ENCODE measurements at regions of chr3 and their contacts with region 1.

Region 1: DNA sequence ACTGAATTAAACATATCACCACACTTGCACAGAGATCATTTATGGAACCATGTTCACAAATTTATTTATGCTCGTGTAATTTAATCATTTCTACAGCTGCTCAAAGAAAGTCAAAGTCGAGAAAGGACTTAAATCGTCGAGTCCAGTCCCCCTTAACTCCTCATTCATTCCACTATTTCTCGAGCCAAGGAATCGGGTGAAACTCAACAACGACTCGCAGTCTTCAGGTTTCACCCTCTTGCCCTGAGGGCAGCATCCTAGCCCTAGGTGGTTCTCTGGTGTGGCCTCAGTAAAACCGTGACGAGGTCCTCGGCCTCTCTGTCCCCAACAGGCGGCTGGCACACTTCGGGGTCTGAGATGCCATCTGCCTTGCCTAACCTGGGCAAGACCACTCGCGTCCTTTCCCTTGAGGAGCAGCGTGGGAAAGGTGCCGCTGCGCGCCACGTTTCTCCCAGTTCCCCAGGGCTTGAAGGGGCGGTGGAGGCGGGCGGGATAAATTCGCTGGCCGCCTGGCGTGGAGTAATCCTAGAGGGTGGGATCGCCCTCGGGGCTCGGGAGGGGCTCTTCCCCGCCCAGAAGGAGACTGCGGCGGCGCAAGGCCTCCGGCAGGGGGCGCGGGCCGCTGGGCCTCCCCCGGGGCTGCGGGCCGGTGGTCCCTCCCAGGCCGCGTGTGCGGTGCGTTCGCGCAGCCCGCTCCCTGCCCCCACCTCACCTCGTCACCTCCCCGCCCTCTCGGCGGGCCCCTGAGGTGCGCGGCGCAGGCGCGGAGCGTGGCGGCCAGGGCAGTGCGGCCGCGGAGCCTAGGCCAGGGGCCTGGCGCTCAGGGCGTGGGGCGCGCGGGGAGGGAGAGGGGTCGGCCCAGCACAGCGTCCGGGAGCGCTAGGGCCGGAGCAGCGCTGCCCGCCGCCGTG is at the start of gene ZNF639:
- DNase-seq: peak; percentile 83 to 91 (median 88)
- H3K4me3 ChIP-seq: peak within 1 kb of the TSS; percentile 77
- H3K27ac ChIP-seq: peak within 1 kb of the TSS; percentile 95 to 96
- H3K4me1 ChIP-seq: peaks cover 3% of the 10 kb centered on the region
- H3K27me3 ChIP-seq: no peaks in the 10 kb centered on the region
- CTCF ChIP-seq: peak; percentile 76 to 95 (median 92)
- EP300 ChIP-seq: no peak
- POLR2A ChIP-seq: peak; percentile 63
- total RNA-seq, gene ZNF639: 32.9 to 45.2 (median 38.3) TPM

Region 2: DNA sequence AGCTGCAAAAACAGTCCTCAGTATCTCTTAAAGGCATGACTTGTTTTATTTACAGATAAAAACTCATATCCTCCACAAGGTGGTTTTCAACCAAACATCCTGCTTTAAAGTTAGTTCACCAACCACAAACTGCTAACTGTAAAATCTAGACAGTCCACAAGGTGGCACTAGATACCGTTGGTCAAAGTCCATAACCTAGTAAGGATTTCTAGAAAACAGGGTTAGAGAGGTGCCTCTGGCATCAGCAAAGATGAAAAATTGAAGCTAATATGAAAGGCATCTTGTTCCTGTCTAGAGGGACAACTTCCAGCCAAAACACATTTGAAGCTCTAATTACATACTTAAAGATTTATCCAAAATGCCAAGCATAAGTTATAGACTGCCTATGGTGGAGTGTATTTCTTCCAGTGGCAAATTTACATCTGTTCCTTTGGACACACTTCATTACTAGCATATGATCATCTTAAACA is 307.0 kb before region 1 on chr3:
- intact Hi-C with region 1: loop called in 3 of 4 experiments (anchors 5 kb)
- DNase-seq: peak in 1 of 5 donors; percentile 58
- H3K4me3 ChIP-seq: no peak overlapping the region
- H3K27ac ChIP-seq: no peak overlapping the region
- H3K4me1 ChIP-seq: no peaks in the 10 kb centered on the region
- H3K27me3 ChIP-seq: no peaks in the 10 kb centered on the region
- CTCF ChIP-seq: peak; percentile 65 to 82 (median 75)
- EP300 ChIP-seq: no peak
- POLR2A ChIP-seq: no peak

Region 3: GRCh38 chr3:179105881-179106280 is 216.7 kb before region 1 on chr3:
- intact Hi-C with region 1: loop called in 2 of 4 experiments (anchors 2 to 10 kb)
- DNase-seq: no peak
- H3K4me3 ChIP-seq: no peak overlapping the region
- H3K27ac ChIP-seq: no peak overlapping the region
- H3K4me1 ChIP-seq: no peaks in the 10 kb centered on the region
- H3K27me3 ChIP-seq: no peaks in the 10 kb centered on the region
- CTCF ChIP-seq: no peak
- EP300 ChIP-seq: no peak
- POLR2A ChIP-seq: no peak

Region 4: DNA sequence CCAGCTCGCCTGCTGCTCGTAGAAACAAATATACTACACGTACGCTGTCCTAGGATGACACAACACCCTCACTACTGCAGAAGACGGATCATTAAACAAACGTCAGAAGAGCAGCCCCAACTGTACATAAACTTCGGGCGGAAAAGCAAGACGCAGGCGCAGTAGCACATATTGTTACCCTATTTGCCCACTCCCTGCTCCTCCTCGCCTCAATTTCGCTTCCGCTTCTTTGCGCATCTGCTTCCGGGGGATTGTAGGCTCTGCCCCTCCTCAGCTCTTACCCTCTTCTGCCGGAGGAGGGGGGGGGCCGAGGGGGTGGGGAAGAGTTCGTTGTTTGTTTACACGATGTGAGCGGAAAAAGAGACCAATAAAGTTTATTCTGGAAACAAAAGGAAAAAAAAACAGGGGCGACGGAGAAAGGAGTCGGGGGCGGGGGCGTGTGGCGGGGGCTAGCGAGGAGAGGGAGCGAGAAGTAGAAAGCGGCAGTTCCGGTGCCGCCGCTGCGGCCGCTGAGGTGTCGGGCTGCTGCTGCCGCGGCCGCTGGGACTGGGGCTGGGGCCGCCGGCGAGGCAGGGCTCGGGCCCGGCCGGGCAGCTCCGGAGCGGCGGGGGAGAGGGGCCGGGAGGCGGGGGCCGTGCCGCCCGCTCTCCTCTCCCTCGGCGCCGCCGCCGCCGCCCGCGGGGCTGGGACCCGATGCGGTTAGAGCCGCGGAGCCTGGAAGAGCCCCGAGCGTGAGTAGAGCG is 174.5 kb before region 1 on chr3 and contains the start of gene PIK3CA:
- intact Hi-C with region 1: loop called in 2 of 4 experiments (anchors 5 kb)
- DNase-seq: peak; percentile 92 to 96 (median 93)
- H3K4me3 ChIP-seq: peak within 1 kb of the TSS; percentile 91
- H3K27ac ChIP-seq: peak within 1 kb of the TSS; percentile 96 to 100
- H3K4me1 ChIP-seq: peaks cover 5% of the 10 kb centered on the region
- H3K27me3 ChIP-seq: no peaks in the 10 kb centered on the region
- CTCF ChIP-seq: peak in 1 of 3 donors; percentile 29
- EP300 ChIP-seq: no peak
- POLR2A ChIP-seq: peak; percentile 64
- total RNA-seq, gene PIK3CA: 15.0 to 29.7 (median 23.2) TPM

Region 5: DNA sequence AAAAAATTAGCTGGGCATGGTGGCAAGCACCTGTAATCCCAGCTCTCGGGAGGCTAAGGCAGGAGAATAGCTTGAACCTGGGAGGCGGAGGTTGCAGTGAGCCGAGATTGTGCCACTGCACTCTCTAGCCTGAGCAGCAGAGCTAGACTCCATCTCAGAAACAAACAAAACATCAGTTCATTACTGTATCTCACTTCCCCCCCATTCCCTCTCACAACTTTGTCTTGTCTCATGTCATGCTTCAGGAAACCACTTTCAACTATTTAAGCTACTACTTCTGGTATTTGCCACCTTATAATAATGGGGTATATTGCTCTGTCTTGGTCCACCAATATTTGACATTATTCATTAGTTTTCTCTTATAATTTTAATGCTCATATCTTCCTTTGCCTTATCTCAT is 148.2 kb before region 1 on chr3:
- intact Hi-C with region 1: no loop called
- DNase-seq: no peak
- H3K4me3 ChIP-seq: no peak overlapping the region
- H3K27ac ChIP-seq: no peak overlapping the region
- H3K4me1 ChIP-seq: peaks cover 5% of the 10 kb centered on the region
- H3K27me3 ChIP-seq: no peaks in the 10 kb centered on the region
- CTCF ChIP-seq: no peak
- EP300 ChIP-seq: no peak
- POLR2A ChIP-seq: no peak

Region 6: GRCh38 chr3:179236669-179237301 is 85.8 kb before region 1 on chr3:
- intact Hi-C with region 1: no loop called
- DNase-seq: no peak
- H3K4me3 ChIP-seq: no peak overlapping the region
- H3K27ac ChIP-seq: no peak overlapping the region
- H3K4me1 ChIP-seq: no peaks in the 10 kb centered on the region
- H3K27me3 ChIP-seq: no peaks in the 10 kb centered on the region
- CTCF ChIP-seq: no peak
- EP300 ChIP-seq: no peak
- POLR2A ChIP-seq: no peak

Region 7: DNA sequence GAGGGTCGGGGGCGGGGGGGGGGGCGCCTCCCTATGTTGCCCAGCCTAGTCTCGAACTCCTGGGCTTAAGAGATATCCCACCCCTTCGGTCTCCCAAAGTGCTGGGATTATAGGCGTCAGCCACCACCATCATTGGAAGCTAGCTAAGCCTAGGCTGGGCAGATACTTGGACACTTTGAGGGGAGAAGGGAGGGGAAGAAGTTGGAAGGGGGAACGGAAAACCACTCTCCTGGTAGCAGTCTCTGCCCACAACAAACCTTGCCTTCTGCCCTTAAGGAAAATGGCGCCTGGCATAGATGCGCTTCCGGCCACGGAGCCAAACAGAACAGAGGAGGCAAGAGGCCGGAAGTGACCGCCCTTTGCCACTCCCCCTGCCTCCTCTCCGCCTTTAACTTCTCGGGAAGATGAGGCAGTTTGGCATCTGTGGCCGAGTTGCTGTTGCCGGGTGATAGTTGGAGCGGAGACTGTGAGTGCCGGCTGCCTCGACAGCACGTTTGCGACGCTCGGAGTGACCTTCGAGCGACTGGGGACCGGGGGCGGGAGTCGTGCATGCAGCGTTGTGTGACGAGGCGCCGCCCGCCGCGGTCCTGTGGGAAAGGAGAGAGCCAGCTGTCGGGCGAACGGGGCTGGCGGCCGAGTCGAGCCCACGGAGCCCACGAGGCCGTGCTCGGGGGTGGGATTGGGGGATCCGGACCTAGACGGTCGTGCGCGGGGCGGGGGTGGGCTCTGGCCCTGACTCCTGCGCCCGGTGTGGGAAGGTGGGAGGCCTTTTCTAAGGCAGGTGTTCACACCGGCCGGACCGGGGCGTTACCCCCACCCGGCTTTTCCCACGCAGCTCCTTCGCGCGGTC is 25.0 kb after region 1 on chr3 and contains the start of gene MFN1:
- intact Hi-C with region 1: loop called in 1 of 4 experiments (anchors 1 kb)
- DNase-seq: peak; percentile 92 to 94 (median 93)
- H3K4me3 ChIP-seq: peak within 1 kb of the TSS; percentile 80
- H3K27ac ChIP-seq: peak within 1 kb of the TSS; percentile 64 to 78
- H3K4me1 ChIP-seq: peaks cover 6% of the 10 kb centered on the region
- H3K27me3 ChIP-seq: no peaks in the 10 kb centered on the region
- CTCF ChIP-seq: no peak
- EP300 ChIP-seq: no peak
- POLR2A ChIP-seq: no peak
- total RNA-seq, gene MFN1: 35.4 to 49.8 (median 39.6) TPM

Region 8: GRCh38 chr3:179580992-179581391 is 258.5 kb after region 1 on chr3:
- intact Hi-C with region 1: no loop called
- DNase-seq: no peak
- H3K4me3 ChIP-seq: no peak overlapping the region
- H3K27ac ChIP-seq: no peak overlapping the region
- H3K4me1 ChIP-seq: no peaks in the 10 kb centered on the region
- H3K27me3 ChIP-seq: no peaks in the 10 kb centered on the region
- CTCF ChIP-seq: no peak
- EP300 ChIP-seq: no peak
- POLR2A ChIP-seq: no peak

Region 9: GRCh38 chr3:180180795-180181194 is 858.3 kb after region 1 on chr3:
- intact Hi-C with region 1: no loop called
- DNase-seq: no peak
- H3K4me3 ChIP-seq: no peak overlapping the region
- H3K27ac ChIP-seq: no peak overlapping the region
- H3K4me1 ChIP-seq: no peaks in the 10 kb centered on the region
- H3K27me3 ChIP-seq: no peaks in the 10 kb centered on the region
- CTCF ChIP-seq: no peak
- EP300 ChIP-seq: no peak
- POLR2A ChIP-seq: no peak

Measured in ovary (tissue), 10 donors.